ENCODE measurements at regions of chr12 and their contacts with region 1.

Region 1: DNA sequence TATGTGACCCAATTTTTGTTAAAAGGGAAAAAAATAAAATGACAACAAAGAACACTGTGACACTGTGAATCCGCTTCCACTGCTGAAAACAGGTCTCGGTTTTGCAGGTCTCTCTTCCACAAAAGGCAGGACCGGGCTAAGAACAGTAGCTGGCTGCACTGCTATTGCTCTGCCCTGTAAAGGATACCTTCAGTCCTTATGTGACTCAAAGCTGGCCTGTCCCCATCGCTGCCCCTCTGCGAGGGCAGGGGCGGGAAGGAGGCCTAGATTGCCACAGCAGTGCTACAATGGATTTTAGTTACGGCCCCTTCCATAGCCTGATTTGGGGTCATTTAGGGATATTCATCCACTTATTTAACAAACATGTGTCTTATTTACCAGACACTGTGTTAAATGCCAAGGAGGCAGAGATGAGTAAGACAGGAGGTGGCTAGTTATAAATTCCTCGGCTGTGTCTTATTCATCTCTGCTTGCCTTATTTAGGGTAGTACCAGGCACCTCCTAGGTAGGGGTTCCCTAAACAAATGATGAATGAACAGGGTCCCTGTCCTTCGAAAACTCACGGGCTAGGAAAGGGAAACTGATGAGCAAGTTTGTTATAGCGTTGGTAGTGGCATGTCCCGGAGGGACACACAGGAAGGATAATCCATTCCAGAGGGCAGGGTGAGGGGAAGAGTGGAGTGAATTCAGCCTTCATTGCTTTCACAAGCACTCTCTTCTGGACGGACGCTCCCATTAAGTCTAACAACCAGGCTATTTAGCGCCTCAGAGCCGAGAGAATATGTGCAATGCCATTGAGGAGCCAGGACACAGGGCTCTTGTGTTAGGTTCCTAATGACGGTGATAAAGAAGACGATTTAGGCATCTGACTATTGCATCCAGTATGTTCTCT is 73.4 kb downstream of the EID3 start:
- DNase-seq: no peak
- H3K4me3 ChIP-seq: no peak overlapping the region
- H3K27ac ChIP-seq: no peak overlapping the region
- H3K4me1 ChIP-seq: peaks cover 0 to 4% (median 2%) of the 10 kb centered on the region in 3 donors
- H3K27me3 ChIP-seq: peaks cover 0 to 10% (median 0%) of the 10 kb centered on the region in 4 donors
- CTCF ChIP-seq: no peak
- POLR2A ChIP-seq: no peak

Region 2: GRCh38 chr12:104022786-104023185 is 354.1 kb before region 1 on chr12:
- intact Hi-C with region 1: no loop called
- DNase-seq: no peak
- H3K4me3 ChIP-seq: no peak overlapping the region
- H3K27ac ChIP-seq: no peak overlapping the region
- H3K4me1 ChIP-seq: no peaks in the 10 kb centered on the region
- H3K27me3 ChIP-seq: no peaks in the 10 kb centered on the region
- CTCF ChIP-seq: no peak
- POLR2A ChIP-seq: no peak

Region 3: GRCh38 chr12:105053116-105053572 is 676.2 kb after region 1 on chr12:
- intact Hi-C with region 1: loop called (anchors 5 kb)
- DNase-seq: no peak
- H3K4me3 ChIP-seq: no peak overlapping the region
- H3K27ac ChIP-seq: no peak overlapping the region
- H3K4me1 ChIP-seq: no peaks in the 10 kb centered on the region
- H3K27me3 ChIP-seq: no peaks in the 10 kb centered on the region
- CTCF ChIP-seq: peak; percentile 84 to 94 (median 90)
- POLR2A ChIP-seq: no peak